Mammary epithelial cell (primary cell): ENCODE measurements at regions of chr3 and their contacts with region 1.

Region 1: DNA sequence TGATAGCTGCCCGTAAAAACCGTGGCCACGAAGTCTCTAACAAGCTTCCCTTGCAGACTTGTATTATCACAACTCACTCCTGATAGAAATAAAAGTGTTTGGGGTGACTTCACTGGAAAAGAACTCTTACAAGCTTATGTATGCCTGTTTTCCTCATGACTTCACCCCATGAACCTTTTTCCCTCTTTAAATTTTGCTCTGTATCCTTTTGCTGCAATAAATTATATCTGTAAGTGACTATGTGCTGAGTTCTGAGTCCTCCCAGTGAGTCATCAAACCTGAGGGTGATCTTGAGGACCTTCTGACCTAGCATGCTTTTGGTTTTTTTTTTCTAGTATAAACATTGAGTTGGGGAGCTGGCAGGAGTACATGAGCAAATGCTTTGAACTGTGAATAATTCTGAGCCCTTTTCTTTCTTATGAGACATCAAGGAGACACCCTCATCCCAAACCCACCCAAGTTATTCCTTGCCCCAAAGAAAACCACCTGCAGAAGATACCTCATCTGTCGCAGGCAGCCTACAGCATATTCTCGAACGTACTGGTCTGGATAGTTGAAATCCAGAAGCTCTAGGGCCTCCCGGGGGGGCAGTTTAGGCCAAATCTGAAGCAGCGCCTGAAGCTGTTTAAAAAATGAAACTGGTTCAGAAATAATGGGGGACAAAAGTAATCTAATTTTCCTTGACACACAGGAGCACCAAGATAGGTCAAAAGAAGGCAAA is 85.9 kb downstream of the FAIM start:
- DNase-seq: peak; percentile 88
- H3K4me3 ChIP-seq: no peak overlapping the region
- H3K27ac ChIP-seq: no peak overlapping the region
- H3K4me1 ChIP-seq: peaks cover 10% of the 10 kb centered on the region
- H3K27me3 ChIP-seq: no peaks in the 10 kb centered on the region
- CTCF ChIP-seq: no peak

Region 2: DNA sequence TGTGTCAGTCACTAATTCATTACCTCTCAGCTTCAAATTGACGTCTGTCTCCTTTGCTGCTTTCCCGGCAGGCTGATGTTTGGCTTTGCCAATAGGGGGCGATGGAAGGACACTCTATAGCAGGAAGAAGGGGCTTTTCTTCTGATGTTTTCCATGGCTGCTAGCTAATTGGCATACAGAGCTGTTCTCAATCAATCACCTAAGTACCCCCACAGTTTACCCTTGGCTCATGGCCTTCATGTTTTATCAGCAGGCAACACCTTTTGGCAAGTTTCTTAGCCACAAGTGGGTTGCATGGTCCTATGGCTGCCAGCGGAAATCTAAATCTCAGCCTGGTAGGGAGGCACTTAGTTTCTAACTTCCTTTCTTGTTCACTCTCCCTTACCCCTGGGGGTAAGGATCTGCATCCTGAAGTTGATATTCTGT is 215.0 kb before region 1 on chr3:
- CTCF ChIA-PET with region 1: no interaction called
- dilution Hi-C with region 1: no loop called
- in situ Hi-C with region 1: no loop called
- intact Hi-C with region 1: loop called (anchors 5 kb)
- DNase-seq: peak; percentile 15
- H3K4me3 ChIP-seq: no peak overlapping the region
- H3K27ac ChIP-seq: no peak overlapping the region
- H3K4me1 ChIP-seq: no peaks in the 10 kb centered on the region
- H3K27me3 ChIP-seq: no peaks in the 10 kb centered on the region
- CTCF ChIP-seq: peak; percentile 86 to 97